Dorsolateral prefrontal cortex (tissue), 120 donors: ENCODE measurements at regions of chr2 and their contacts with region 1.

Region 1: DNA sequence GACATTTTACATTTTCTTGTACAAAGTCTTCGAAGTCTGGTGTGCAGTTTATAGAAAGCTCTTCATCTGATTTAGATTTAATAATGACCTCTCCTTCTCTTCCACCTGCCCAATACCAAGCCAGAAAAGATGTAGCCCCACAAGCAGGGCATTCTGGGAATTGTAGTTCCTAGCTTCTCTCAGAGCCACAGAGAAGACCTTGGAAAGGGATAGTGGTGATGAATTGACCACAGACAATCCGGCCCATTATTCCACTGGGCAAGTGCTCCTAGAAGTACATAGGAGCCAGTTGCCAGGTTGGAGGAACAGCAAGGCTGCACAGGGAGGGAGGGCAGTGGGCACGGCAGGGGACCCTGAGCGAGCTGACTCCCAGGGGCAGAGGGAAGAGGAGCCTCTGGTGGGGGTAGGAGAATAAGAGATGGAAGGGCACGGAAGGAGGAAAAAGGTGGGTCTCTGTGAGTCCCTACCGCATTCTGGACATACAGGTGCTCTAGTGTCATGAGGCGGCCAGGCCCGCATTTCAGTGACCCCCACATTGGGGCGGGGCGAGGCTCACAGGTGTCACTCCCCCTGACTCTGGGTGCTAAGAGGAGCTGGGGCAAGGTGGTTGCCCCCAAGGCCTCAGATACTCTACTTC is 152.5 kb upstream of the HAAO start:
- DNase-seq: no peak
- H3K4me3 ChIP-seq: no peak overlapping the region
- H3K27ac ChIP-seq: no peak overlapping the region
- H3K27me3 ChIP-seq: no peaks in the 10 kb centered on the region
- CTCF ChIP-seq: no peak

Region 2: GRCh38 chr2:43024515-43025011 is 79.7 kb after region 1 on chr2:
- intact Hi-C with region 1: loop called in 1 of 2 experiments (anchors 2 kb)
- DNase-seq: peak in 8 of 10 donors; percentile 47 to 78 (median 69)
- H3K4me3 ChIP-seq: no peak overlapping the region
- H3K27ac ChIP-seq: peak overlapping the region in 51 of 59 donors; percentile 0 to 93 (median 70)
- H3K27me3 ChIP-seq: no peaks in the 10 kb centered on the region
- CTCF ChIP-seq: peak; percentile 56 to 96 (median 83)

Region 3: DNA sequence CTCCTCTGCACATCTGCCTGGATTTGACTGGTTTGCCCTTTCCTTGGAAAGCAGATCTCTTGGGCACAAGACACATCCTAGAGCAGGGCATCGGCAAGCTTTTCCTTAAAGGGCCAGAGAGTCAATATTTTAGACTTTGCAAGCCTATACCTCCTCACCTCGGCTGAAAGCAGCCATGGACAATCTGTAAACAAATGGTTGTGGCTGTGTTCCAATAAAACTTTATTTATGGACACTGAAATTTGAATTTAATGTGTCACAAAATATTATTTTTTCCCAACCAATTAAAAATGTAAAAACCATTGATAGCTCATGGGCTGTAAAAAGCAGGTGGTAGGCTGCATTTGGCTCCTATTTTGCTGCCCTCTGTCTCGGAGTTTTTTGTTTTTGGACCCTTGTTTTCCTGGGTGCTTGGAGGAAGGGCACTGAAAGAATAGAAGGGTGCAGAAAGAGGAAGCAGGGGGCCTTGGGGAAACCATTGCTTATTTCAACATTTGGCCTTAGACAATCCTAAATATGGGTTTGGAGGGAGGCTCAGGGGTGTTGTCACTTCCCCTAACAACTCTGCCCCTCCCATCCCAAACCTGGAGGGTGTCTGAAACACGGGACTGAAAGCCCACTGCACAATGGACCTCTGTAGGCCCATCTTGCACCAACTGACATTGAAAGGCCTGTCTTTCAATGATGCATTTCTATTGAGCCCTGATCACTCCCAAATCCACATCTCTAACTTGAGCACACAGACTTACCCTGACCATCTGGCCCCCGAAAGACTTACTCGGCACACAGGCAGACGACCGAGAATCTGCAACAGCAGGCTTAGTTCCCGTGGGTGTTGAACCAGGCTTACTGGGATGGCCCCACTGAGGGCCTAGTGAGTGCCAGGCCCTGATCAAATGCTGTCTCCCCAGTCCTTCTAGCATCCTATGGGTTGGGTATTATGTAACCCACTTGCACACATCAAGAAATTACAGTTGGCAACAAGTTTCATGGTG is 288.6 kb after region 1 on chr2:
- intact Hi-C with region 1: loop called (anchors 5 kb)
- DNase-seq: no peak
- H3K4me3 ChIP-seq: no peak overlapping the region
- H3K27ac ChIP-seq: peak overlapping the region in 10 of 59 donors; percentile 5 to 50 (median 22)
- H3K27me3 ChIP-seq: no peaks in the 10 kb centered on the region
- CTCF ChIP-seq: no peak

Region 4: GRCh38 chr2:43266711-43267111 is 321.8 kb after region 1 on chr2:
- intact Hi-C with region 1: no loop called
- DNase-seq: peak in 2 of 10 donors; percentile 18 to 34
- H3K4me3 ChIP-seq: no peak overlapping the region
- H3K27ac ChIP-seq: peak overlapping the region in 2 of 59 donors; percentile 25 to 26
- H3K27me3 ChIP-seq: no peaks in the 10 kb centered on the region
- CTCF ChIP-seq: no peak